Naive thymus-derived CD4-positive, alpha-beta T cell (primary cell): ENCODE measurements at regions of chr13 and their contacts with region 1.

Region 1: GRCh38 chr13:30371649-30372265 is 50.5 kb upstream of the UBE2L5 start:
- DNase-seq: peak; percentile 22 to 92 (median 89)
- ATAC-seq: peak; percentile 78
- H3K4me3 ChIP-seq: peak overlapping the region; percentile 37
- H3K4me3 Mint-ChIP-seq: peak overlapping the region; percentile 51 to 91 (median 76)
- H3K27ac ChIP-seq: peak overlapping the region; percentile 58
- H3K27ac Mint-ChIP-seq: peak overlapping the region; percentile 90 to 98 (median 95)
- H3K4me1 ChIP-seq: peaks cover 73% of the 10 kb centered on the region in 2 donors
- H3K4me1 Mint-ChIP-seq: peaks cover 68 to 87% (median 78%) of the 10 kb centered on the region in 7 donors
- H3K27me3 ChIP-seq: no peaks in the 10 kb centered on the region
- H3K27me3 Mint-ChIP-seq: no peaks in the 10 kb centered on the region

Region 2: DNA sequence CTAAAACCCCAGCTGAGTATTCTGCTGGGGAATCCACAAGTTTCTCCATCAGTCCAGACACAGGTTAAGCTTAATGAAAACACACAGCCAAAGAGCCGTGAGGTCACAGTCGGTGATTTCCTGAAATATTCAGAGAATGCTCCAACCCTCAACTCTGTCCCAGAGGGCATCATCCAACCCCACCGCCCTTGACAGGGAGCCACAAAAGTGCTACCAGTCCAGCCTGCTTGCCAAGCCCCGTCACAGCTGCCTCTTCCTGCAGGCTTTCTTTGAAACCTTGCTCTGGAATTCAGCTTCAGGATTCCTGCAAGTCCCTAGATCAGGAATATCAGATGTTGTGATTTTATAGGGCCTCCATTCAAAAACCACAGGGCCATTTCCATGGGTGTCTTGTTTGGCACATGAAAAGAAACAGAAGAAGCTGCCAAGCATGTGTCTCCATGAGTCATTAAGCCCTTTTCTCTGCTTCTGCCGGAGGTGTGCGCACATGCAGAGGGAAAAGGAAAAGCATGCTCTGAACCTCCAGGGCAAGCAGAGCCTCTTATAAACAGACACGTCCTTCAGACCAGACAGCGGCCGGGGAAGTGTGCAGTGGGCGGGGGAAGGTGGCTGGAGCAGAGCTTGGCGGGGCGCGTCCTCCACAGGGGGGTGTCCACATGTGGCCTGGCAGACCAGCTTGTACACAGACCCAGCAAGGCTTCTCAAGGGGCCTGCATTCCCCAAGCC is 229.1 kb before region 1 on chr13:
- CTCF ChIA-PET with region 1: no interaction called
- POLR2A ChIA-PET with region 1: interaction called, 4 read pairs
- intact Hi-C with region 1: loop called (anchors 5 kb)
- DNase-seq: peak in 1 of 9 donors; percentile 49
- ATAC-seq: peak; percentile 41
- H3K4me3 ChIP-seq: no peak overlapping the region
- H3K4me3 Mint-ChIP-seq: peak overlapping the region in 4 of 10 donors; percentile 10 to 61 (median 29)
- H3K27ac ChIP-seq: no peak overlapping the region
- H3K27ac Mint-ChIP-seq: peak overlapping the region; percentile 45 to 93 (median 76)
- H3K4me1 ChIP-seq: peaks cover 25 to 47% of the 10 kb centered on the region in 2 donors
- H3K4me1 Mint-ChIP-seq: peaks cover 29 to 64% (median 60%) of the 10 kb centered on the region in 7 donors
- H3K27me3 ChIP-seq: no peaks in the 10 kb centered on the region
- H3K27me3 Mint-ChIP-seq: peaks cover 0 to 5% (median 0%) of the 10 kb centered on the region in 5 donors

Region 3: DNA sequence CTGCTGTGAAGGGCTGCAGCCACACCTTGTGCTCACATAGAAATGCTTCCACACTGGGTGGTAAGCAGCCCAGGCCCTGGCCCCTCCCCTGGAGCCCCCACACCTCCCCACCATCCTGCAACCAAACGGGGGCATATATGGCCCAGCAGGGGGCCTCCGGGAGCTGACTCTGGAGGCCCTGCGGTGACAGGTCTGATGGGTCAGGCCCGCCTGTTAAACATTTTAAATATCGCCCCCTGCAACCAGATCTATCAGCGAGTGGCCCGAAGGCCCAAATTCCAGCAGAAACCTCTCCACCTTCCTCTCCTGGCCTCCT is 16.4 kb before region 1 on chr13:
- CTCF ChIA-PET with region 1: interaction called, 6 read pairs
- POLR2A ChIA-PET with region 1: interaction called, 12 read pairs
- intact Hi-C with region 1: loop called in 1 of 2 experiments (anchors 1 kb)
- DNase-seq: peak in 3 of 9 donors; percentile 26 to 40 (median 28)
- ATAC-seq: peak; percentile 84
- H3K4me3 ChIP-seq: no peak overlapping the region
- H3K4me3 Mint-ChIP-seq: peak overlapping the region in 7 of 10 donors; percentile 14 to 61 (median 32)
- H3K27ac ChIP-seq: no peak overlapping the region
- H3K27ac Mint-ChIP-seq: peak overlapping the region in 3 of 9 donors; percentile 8 to 75 (median 39)
- H3K4me1 ChIP-seq: peaks cover 0 to 4% of the 10 kb centered on the region in 2 donors
- H3K4me1 Mint-ChIP-seq: peaks cover 10 to 40% (median 35%) of the 10 kb centered on the region in 7 donors
- H3K27me3 ChIP-seq: no peaks in the 10 kb centered on the region
- H3K27me3 Mint-ChIP-seq: no peaks in the 10 kb centered on the region

Region 4: GRCh38 chr13:30408319-30409101 is 36.8 kb after region 1 on chr13:
- CTCF ChIA-PET with region 1: interaction called, 8 read pairs
- POLR2A ChIA-PET with region 1: interaction called, 19 read pairs
- intact Hi-C with region 1: loop called (anchors 1 to 5 kb)
- DNase-seq: peak; percentile 78 to 89 (median 85)
- ATAC-seq: peak; percentile 97
- H3K4me3 ChIP-seq: peak overlapping the region; percentile 44
- H3K4me3 Mint-ChIP-seq: peak overlapping the region; percentile 64 to 78 (median 72)
- H3K27ac ChIP-seq: peak overlapping the region; percentile 52
- H3K27ac Mint-ChIP-seq: peak overlapping the region; percentile 51 to 87 (median 83)
- H3K4me1 ChIP-seq: peaks cover 9 to 14% of the 10 kb centered on the region in 2 donors
- H3K4me1 Mint-ChIP-seq: peaks cover 6 to 46% (median 37%) of the 10 kb centered on the region in 7 donors
- H3K27me3 ChIP-seq: no peaks in the 10 kb centered on the region
- H3K27me3 Mint-ChIP-seq: peaks cover 0 to 12% (median 0%) of the 10 kb centered on the region in 5 donors

Region 5: DNA sequence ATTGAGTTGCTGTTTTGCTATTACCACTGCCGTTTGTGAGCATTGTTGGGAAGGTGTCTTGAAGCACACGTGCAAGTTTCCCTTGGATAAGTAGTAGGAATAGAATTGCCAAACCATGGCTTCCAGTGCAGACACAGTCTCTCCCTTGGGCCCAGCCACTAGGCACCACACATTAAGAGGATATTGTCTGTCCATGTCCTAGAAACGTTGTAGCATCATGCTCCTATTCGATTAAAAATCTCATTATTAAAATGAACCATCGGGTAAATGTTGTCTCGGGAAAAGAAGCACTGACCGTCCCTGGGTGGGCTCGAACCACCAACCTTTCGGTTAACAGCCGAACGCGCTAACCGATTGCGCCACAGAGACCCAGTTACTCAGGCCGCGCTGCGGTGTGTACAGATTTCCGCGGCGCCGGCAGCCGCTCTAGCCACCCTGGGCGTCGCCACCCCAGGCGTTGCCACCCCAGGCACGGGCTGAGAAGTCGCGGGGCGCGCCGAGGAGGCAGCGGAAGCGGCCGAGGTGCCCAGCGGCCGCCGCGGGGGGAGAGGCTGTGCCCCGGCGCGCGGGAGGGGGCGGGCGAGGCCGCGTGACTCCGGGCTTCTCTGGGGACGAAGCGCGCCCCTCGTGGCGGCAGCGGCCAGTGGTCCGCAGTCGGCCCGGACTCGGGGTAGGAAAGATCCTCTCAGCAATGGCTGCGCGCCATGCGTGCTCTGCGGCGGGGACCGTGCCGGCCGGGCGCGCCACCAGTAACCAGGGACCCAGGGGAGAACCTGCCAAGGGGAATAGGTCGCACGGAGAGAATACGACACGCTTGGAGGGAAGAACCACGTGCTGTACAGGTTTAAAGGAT is 302.1 kb after region 1 on chr13:
- CTCF ChIA-PET with region 1: no interaction called
- POLR2A ChIA-PET with region 1: no interaction called
- intact Hi-C with region 1: loop called in 1 of 2 experiments (anchors 5 kb)
- DNase-seq: peak; percentile 79 to 94 (median 86)
- ATAC-seq: peak; percentile 97
- H3K4me3 ChIP-seq: peak overlapping the region; percentile 67
- H3K4me3 Mint-ChIP-seq: peak overlapping the region; percentile 72 to 90 (median 88)
- H3K27ac ChIP-seq: peak overlapping the region; percentile 38
- H3K27ac Mint-ChIP-seq: peak overlapping the region; percentile 81 to 98 (median 91)
- H3K4me1 ChIP-seq: peaks cover 0 to 5% of the 10 kb centered on the region in 2 donors
- H3K4me1 Mint-ChIP-seq: peaks cover 2 to 32% (median 15%) of the 10 kb centered on the region in 7 donors
- H3K27me3 ChIP-seq: no peaks in the 10 kb centered on the region
- H3K27me3 Mint-ChIP-seq: peaks cover 0 to 36% (median 0%) of the 10 kb centered on the region in 5 donors